Activated T-helper 2 cell treated with anti-CD3 and anti-CD28 coated beads, Interferon-gamma antibody, Interleukin-2, Interleukin-4, amounts not matched to agents 10 μg/mL and 5 μg/mL and 100 μg/mL, durations not matched to agents 14 hours and 24 hours and 36 hours (primary cell): ENCODE measurements at regions of chr6 and their contacts with region 1.

Region 1: DNA sequence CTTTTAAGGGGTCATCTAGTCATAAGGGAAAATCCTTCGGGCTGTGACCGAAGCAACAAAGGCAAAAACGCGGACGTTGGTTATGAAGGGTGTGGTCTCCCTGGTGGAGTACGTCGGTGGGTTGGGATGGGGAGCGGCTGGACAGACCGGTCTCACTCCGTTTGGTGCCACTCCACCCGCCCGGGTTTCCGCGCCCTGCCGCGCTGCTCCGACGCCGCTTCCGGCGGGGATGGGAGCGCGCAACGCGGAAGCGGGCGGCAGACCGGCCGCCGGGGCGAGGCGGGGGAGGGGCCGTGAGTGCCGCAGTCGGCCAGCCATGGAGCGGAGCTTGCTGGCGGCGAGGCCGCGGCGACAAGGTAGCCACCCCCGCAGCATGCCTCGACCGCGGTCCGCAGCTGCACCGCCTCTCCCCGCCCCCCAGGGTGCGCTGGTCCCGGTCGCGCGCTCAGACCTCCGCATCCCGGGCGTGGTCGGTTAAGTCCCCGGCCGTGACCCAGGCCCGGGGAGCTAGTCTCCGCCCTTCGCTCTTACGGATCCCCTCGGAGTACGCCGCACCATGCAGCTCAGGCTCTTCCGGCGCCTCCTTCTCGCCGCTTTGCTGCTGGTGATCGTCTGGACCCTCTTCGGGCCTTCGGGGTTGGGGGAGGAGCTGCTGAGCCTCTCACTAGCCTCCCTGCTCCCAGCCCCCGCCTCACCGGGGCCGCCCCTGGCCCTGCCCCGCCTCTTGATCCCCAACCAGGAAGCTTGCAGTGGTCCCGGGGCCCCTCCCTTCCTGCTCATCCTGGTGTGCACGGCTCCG is at the start of gene B3GALT4:
- DNase-seq: peak; percentile 73
- H3K4me3 Mint-ChIP-seq: peak within 1 kb of the TSS; percentile 98
- H3K27ac Mint-ChIP-seq: peak within 1 kb of the TSS; percentile 89
- H3K4me1 Mint-ChIP-seq: peaks cover 35% of the 10 kb centered on the region
- H3K27me3 Mint-ChIP-seq: no peaks in the 10 kb centered on the region
- total RNA-seq, gene B3GALT4: 5.1 and 6.5 TPM in 2 replicates

Region 2: DNA sequence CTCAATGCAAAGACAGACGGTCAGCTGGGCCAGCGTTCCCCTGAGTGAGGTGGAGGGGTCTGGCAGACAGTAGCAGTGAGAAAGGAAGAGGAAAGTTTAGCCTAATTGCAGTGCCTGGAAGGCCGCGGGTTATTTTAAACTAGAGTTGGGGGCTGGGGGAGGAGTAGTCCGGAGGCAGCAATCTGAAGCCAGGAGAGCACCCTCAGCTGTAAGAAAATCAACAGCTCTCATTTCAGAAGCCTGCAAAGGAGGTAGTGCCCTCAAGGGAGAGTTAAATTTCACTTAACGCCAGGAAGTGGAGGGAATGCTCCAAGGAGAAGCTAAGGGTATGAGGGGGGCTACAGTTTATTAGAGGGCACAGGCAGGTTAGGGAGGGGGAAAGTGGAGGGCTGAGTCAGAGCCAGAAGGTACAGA is 41.8 kb before region 1 on chr6:
- intact Hi-C with region 1: no loop called
- DNase-seq: no peak
- H3K4me3 Mint-ChIP-seq: no peak overlapping the region
- H3K27ac Mint-ChIP-seq: no peak overlapping the region
- H3K4me1 Mint-ChIP-seq: peaks cover 2% of the 10 kb centered on the region
- H3K27me3 Mint-ChIP-seq: peaks cover 43% of the 10 kb centered on the region

Region 3: DNA sequence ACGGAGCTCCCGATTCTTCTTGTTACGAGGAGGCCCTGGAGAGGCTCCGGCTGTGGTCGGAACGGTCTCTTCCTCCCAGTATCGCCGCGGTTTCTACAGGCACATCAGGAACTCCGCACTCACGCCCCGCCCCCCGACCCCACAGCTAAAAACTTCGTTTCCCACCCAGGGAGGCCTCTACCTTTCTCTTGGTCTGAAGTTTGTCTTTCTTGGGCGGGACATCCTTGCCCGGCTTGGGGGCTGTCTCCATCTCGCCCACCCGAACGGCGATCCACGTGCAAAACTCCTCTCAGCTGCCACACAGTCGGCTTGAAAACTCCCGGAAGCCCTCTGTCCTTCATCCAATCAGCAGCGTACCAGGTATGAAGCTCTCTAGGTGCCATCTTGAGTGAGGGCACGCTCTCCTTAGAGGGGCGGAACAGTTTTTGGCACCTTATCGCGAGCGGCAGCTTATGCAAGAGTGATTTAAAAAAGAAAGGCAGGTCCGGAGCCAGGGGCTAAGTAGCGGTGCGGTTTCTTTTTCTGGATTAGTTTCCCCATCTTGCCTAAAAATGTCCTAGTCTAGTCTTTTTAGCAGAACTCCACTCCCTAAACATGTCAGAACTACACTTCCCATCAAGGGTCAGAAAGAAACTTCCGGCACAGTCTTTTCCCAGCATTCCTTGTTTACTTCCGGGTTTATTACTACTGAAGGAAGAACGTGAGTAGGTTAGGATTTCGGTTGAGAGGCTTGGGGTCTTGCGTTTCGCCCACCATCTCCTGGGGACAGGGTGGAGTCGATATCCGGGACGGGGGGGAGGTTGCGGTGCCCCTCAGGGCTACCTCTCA is 12.1 kb after region 1 on chr6 and contains the starts of genes PFDN6 and WDR46:
- intact Hi-C with region 1: loop called (anchors 1 kb)
- DNase-seq: peak; percentile 83
- H3K4me3 Mint-ChIP-seq: peak within 1 kb of the TSS; percentile 98
- H3K27ac Mint-ChIP-seq: peak within 1 kb of the TSS; percentile 88
- H3K4me1 Mint-ChIP-seq: peaks cover 25% of the 10 kb centered on the region
- H3K27me3 Mint-ChIP-seq: no peaks in the 10 kb centered on the region
- total RNA-seq, gene PFDN6: 104 and 117 TPM in 2 replicates
- total RNA-seq, gene WDR46: 87.3 and 98.3 TPM in 2 replicates